A673 (cell line): ENCODE measurements at regions of chr7 and their contacts with region 1.

Region 1: DNA sequence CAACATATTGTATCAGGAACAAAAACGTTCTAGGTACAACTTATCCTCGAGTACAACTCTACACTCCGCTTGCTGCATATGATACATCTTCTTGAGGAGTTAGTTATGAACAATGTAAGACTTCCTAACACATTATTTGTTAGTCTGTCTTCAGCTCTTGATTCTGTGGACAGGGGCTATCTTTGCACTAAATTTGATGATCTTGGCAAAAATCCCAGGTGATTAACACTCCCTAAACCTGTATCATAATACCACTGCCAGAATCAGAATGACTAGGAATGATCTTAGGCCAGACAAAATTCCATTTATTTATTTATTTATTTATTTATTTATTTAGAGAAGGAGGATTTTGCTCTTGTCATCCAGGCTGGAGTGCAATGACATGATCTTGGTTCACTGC is 108.7 kb upstream of the AUTS2 start:
- DNase-seq: no peak
- H3K4me3 ChIP-seq: no peak overlapping the region
- H3K27ac ChIP-seq: no peak overlapping the region
- H3K4me1 ChIP-seq: no peaks in the 10 kb centered on the region
- H3K27me3 ChIP-seq: no peaks in the 10 kb centered on the region
- CTCF ChIP-seq: no peak

Region 2: GRCh38 chr7:67940400-67940799 is 1549.1 kb before region 1 on chr7:
- CTCF ChIA-PET with region 1: no interaction called
- POLR2A ChIA-PET with region 1: no interaction called
- intact Hi-C with region 1: no loop called
- DNase-seq: no peak
- H3K4me3 ChIP-seq: no peak overlapping the region
- H3K27ac ChIP-seq: no peak overlapping the region
- H3K4me1 ChIP-seq: no peaks in the 10 kb centered on the region
- H3K27me3 ChIP-seq: no peaks in the 10 kb centered on the region
- CTCF ChIP-seq: no peak

Region 3: GRCh38 chr7:70288781-70289456 is 799.4 kb after region 1 on chr7:
- CTCF ChIA-PET with region 1: no interaction called
- POLR2A ChIA-PET with region 1: interaction called, 10 read pairs
- intact Hi-C with region 1: no loop called
- DNase-seq: no peak
- H3K4me3 ChIP-seq: no peak overlapping the region
- H3K27ac ChIP-seq: no peak overlapping the region
- H3K4me1 ChIP-seq: no peaks in the 10 kb centered on the region
- H3K27me3 ChIP-seq: no peaks in the 10 kb centered on the region
- CTCF ChIP-seq: no peak